ENCODE measurements at regions of chr6 and their contacts with region 1.

Region 1: DNA sequence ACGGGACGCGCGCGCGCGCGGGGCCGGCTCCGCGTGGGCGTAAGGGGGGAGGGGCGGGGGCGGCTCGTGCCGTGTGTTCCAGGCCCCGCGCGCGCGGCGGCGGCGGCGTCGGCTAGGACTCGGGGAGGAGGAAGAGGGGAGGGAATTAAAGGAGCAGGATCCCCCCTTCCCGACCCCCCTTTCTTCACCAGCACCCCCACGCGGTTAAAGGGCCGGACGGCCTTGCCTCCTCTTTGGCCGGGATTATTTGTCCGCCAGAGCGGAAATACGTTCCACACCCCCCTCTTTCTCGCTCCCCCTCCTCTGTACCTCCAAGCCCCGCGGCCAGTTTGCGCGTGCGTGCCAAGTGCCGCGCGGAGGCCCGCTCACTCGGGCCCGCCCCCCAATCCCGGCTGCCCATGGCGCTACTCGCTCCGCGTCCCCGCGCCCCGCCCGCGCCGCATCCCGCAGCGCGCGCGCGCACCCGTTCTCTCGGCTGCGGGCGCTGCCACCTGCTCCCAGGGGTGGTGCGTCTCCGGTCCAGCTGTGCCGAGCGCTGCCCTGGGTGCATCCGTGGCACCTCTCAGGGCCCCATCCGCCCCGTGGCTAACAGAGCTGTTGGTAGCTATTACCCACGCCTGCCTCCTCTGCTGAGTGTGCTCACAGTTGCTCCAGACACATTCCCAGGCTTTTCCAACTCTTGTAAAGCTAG is at the start of gene ZBTB12:
- DNase-seq: peak; percentile 90
- H3K4me3 ChIP-seq: peak within 1 kb of the TSS; percentile 50
- H3K27ac ChIP-seq: peak within 1 kb of the TSS; percentile 82
- H3K4me1 ChIP-seq: no peaks in the 10 kb centered on the region
- H3K27me3 ChIP-seq: no peaks in the 10 kb centered on the region
- CTCF ChIP-seq: no peak
- total RNA-seq, gene ZBTB12: 2.0 to 4.9 TPM

Region 2: DNA sequence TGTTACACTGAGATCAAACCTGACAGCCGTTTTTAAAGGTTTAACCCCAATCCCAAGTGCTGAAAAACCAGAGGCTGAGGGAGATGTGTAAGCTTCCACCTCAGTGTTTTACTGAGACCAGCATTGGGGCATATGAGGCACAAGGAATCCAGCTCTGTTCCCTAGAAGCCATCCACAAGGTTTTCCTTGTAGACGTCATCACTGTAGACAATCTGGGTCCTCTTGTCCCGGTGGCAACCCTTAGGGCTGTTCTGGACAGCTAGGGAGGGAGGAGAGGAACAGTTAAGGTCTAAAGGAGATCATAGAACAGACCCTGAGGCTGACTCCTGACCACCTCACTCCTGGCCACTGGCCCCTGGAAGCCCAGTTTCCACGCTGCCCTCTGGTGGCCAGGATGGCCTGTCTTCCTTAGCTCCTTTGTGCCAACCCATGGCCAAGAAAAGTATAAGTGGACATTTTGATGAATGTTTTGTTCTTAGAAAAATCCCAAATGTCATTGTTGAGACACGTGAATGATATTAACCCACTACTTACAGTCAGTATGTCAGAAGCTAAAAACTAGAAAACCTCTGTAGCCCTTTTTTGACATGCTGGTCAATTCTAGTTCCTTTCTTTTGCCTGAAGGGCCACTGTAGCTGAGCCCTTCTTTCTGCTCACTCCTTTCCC is 50.2 kb after region 1 on chr6:
- intact Hi-C with region 1: loop called (anchors 5 kb)
- DNase-seq: peak; percentile 66
- H3K4me3 ChIP-seq: no peak overlapping the region
- H3K27ac ChIP-seq: no peak overlapping the region
- H3K4me1 ChIP-seq: no peaks in the 10 kb centered on the region
- H3K27me3 ChIP-seq: no peaks in the 10 kb centered on the region
- CTCF ChIP-seq: peak; percentile 66

Measured in colonic mucosa (tissue), 4 donors.